Prostate gland (tissue), 2 donors: ENCODE measurements at regions of chr3 and their contacts with region 1.

Region 1: DNA sequence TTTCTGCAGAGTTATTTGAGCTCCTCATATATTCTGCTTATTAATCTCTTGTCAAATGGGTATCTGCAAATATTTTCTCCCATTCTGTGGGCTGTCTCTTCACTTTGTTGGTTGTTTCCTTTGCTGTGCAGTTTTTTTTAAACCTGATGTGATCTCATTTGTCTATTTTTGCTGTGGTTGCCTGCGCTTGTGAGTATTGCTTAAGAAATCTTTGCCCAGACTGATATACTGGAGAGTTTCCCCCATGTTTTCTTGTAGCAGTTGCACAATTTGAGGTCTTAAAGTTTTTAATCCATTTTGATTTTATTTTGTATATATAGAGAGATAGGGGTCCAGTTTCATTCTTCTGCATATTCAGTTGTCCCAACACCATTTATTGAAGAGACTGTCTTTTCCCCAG is 102.3 kb downstream of the POLQ start:
- DNase-seq: no peak
- H3K4me3 ChIP-seq: no peak overlapping the region
- H3K27ac ChIP-seq: no peak overlapping the region
- H3K4me1 ChIP-seq: no peaks in the 10 kb centered on the region
- H3K27me3 ChIP-seq: no peaks in the 10 kb centered on the region
- CTCF ChIP-seq: no peak
- POLR2A ChIP-seq: no peak

Region 2: DNA sequence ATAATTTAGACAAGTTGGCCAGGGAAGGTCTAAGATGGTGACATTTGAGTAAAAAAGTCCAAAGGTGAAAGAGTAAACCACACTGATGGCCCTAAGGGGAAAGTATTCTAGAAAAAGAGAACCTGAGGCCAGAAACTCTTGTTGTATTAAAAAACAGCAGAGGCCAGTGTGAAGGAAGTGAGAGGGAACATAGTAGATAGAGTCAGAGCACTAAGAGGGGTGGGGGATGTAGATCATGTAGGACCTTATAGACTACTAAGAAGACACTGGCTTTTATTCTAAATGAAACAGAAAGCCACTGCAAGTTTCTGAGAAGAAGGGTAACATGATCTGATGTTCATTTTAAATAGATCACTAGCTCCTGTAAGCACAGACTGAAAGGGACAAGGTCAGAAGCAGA is 87.8 kb after region 1 on chr3:
- intact Hi-C with region 1: no loop called
- DNase-seq: no peak
- H3K4me3 ChIP-seq: no peak overlapping the region
- H3K27ac ChIP-seq: no peak overlapping the region
- H3K4me1 ChIP-seq: no peaks in the 10 kb centered on the region
- H3K27me3 ChIP-seq: no peaks in the 10 kb centered on the region
- CTCF ChIP-seq: no peak
- POLR2A ChIP-seq: no peak

Region 3: DNA sequence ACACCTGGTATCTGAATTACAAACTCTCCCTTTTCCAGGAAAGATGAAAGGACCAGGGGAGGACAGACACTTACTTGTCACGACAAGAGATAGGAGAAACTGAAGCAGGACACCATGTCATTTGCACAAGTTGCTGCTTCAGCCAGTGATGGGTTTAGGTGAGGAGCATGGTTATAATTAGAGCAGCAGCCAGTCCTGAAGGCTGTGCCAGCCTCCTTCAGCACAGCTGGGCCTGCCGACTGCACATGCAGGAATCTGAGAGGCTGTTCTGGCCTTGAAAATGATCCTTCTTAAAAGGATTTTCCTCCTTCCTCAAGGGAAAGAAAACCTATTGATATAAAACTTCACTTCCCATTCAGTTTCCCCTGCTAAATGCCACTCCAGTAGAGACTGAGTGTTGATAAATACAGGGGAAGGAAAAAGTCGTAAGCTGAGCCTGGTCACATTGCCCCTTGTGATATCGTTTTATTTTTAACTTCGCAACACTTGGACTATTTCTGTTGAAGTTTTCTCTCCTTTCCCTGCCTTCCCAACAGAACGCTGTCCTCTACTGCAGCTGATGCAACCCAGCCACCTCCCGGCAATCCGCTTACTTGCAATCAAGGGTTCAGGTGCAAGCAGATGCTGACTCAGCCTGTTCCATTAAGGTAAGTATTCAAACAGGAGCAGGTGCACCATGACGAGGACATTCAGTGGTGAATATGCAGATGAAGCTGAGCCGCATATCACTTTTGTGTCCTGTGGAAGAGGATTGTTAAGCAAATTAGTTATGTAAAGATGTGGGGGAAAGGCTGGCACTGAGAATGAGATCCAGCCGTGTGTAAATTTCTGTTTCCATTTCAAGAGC is 149.6 kb after region 1 on chr3 and contains the start of gene FBXO40:
- intact Hi-C with region 1: loop called (anchors 5 kb)
- DNase-seq: no peak
- H3K4me3 ChIP-seq: no peak within 1 kb of the TSS
- H3K27ac ChIP-seq: no peak within 1 kb of the TSS
- H3K4me1 ChIP-seq: no peaks in the 10 kb centered on the region
- H3K27me3 ChIP-seq: no peaks in the 10 kb centered on the region
- CTCF ChIP-seq: no peak
- POLR2A ChIP-seq: no peak
- total RNA-seq, gene FBXO40: 0.18 to 0.68 TPM

Region 4: DNA sequence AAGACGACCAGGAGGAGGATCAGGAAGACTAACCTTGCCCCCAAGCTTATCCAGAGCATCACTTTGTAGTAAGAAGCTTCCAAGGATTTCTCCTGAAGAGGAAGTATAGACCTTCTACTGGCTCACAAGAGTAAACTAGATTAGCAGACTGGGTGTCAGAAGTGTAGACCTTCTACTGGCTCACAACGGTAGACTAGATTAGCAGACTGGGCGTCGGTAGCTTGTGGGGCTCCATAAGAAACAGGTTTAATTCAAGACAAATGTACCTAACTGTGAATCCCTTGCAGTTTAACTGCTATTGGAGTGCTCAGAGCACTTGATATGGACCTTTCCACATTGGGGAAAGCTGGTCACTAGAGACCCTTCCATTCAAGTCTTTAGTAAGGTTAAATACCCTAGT is 162.7 kb after region 1 on chr3:
- intact Hi-C with region 1: no loop called
- DNase-seq: no peak
- H3K4me3 ChIP-seq: no peak overlapping the region
- H3K27ac ChIP-seq: no peak overlapping the region
- H3K4me1 ChIP-seq: no peaks in the 10 kb centered on the region
- H3K27me3 ChIP-seq: no peaks in the 10 kb centered on the region
- CTCF ChIP-seq: no peak
- POLR2A ChIP-seq: no peak